ENCODE measurements at regions of chr7 and their contacts with region 1.

Region 1: DNA sequence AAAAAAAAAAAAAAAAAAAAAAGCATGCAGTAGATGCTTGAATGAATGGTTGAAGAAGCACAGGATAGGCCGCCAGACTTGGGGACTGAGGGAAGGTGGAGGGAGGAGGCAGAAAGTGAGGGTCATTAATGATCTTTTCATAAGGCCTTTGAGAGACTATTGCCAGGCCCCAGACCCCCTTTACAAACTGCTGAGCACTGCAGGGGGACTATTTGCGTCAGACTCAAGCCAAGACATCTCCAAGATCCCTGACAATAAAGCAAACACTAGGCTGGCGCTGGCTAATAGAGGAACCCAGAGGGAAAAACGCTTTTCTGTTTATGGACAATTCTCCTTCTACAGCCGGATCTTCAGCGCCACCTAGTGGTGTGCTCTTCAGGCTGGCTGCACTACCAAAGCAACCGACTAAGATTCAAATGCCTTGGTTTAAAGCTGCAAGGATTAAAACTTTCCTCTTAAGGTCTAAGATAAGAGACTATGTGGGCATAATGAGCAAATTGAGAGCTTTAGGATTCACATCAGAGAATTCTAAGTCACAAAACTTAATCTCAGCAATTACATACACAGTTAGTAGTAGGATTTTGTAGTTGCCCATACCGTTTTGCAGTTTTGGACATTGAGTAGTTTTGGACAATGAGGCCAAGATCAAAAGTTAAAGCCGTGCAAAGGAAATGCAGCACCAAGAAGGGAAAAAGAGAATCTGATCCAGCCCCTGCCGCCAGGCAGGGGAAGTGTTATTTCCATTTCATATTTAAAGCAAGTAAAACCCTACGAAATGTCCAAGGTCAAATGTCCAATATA is 17.9 kb upstream of the AGK start:
- DNase-seq: peak; percentile 67
- H3K4me3 ChIP-seq: no peak overlapping the region
- H3K27ac ChIP-seq: no peak overlapping the region
- H3K4me1 ChIP-seq: no peaks in the 10 kb centered on the region
- H3K27me3 ChIP-seq: peaks cover 0 to 4% of the 10 kb centered on the region in 2 experiments
- CTCF ChIP-seq: peak; percentile 91 to 97
- POLR2A ChIP-seq: no peak

Region 2: GRCh38 chr7:140517546-140518369 is 1015.6 kb before region 1 on chr7:
- CTCF ChIA-PET with region 1: interaction called, 6 read pairs
- POLR2A ChIA-PET with region 1: no interaction called
- dilution Hi-C with region 1: no loop called
- intact Hi-C with region 1: loop called (anchors 1 kb)
- DNase-seq: peak; percentile 79
- H3K4me3 ChIP-seq: no peak overlapping the region
- H3K27ac ChIP-seq: no peak overlapping the region
- H3K4me1 ChIP-seq: no peaks in the 10 kb centered on the region
- H3K27me3 ChIP-seq: no peaks in the 10 kb centered on the region
- CTCF ChIP-seq: peak; percentile 77 to 92
- POLR2A ChIP-seq: no peak

Region 3: DNA sequence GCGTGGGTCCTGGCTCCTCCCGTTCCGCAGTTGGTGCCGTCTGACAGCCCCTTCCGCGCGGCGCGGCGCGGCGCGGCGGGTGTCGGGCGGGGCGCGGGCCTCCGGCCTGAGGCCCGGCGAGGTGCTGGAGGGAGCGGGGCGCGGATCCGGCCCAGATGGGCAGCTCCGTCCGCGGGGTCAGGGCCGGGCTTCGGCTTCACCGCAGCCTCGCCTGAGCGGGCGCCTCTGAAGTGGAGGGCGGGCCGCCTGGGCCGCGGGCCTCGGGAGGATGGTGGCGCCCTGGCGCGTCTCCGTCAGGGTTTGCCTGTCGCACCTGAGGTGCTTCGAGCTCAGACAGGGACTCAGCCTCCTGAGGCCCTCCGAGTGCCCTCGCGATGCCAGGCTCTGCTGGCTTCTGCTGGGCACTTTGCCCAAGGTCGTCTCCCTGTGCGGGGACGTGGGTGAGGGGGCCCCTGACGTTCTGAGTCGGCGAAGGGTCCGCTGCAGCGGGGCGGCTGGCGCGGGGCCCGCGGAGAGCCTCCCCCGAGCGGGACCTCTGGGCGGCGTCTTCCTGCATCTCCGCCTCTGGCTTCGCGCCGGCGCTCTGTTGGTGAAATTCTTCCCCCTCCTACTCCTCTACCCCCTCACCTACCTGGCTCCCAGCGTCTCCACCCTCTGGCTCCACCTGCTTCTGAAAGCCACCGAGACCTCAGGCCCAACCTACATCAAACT is 860.1 kb before region 1 on chr7:
- CTCF ChIA-PET with region 1: interaction called, 10 read pairs
- POLR2A ChIA-PET with region 1: no interaction called
- dilution Hi-C with region 1: no loop called
- intact Hi-C with region 1: loop called (anchors 5 kb)
- DNase-seq: peak; percentile 28
- H3K4me3 ChIP-seq: peak overlapping the region; percentile 22 to 76 (median 45)
- H3K27ac ChIP-seq: no peak overlapping the region
- H3K4me1 ChIP-seq: peaks cover 8% of the 10 kb centered on the region
- H3K27me3 ChIP-seq: peaks cover 0 to 3% of the 10 kb centered on the region in 2 experiments
- CTCF ChIP-seq: no peak
- POLR2A ChIP-seq: no peak

Region 4: GRCh38 chr7:140924019-140924820 is 609.1 kb before region 1 on chr7:
- CTCF ChIA-PET with region 1: no interaction called
- POLR2A ChIA-PET with region 1: no interaction called
- dilution Hi-C with region 1: no loop called
- intact Hi-C with region 1: loop called (anchors 10 kb)
- DNase-seq: peak; percentile 85
- H3K4me3 ChIP-seq: peak overlapping the region; percentile 64 to 89 (median 88)
- H3K27ac ChIP-seq: peak overlapping the region; percentile 93
- H3K4me1 ChIP-seq: peaks cover 12% of the 10 kb centered on the region
- H3K27me3 ChIP-seq: peaks cover 3 to 4% of the 10 kb centered on the region in 2 experiments
- CTCF ChIP-seq: peak; percentile 37 to 56
- POLR2A ChIP-seq: peak; percentile 62

Region 5: GRCh38 chr7:141251957-141252356 is 281.4 kb before region 1 on chr7:
- CTCF ChIA-PET with region 1: no interaction called
- POLR2A ChIA-PET with region 1: no interaction called
- dilution Hi-C with region 1: no loop called
- intact Hi-C with region 1: loop called (anchors 10 kb)
- DNase-seq: no peak
- H3K4me3 ChIP-seq: no peak overlapping the region
- H3K27ac ChIP-seq: no peak overlapping the region
- H3K4me1 ChIP-seq: no peaks in the 10 kb centered on the region
- H3K27me3 ChIP-seq: no peaks in the 10 kb centered on the region
- CTCF ChIP-seq: no peak
- POLR2A ChIP-seq: no peak

Measured in endothelial cell of umbilical vein (primary cell).